Activated B cell treated with CpG ODN at 0.5 μM for 24 hours (primary cell): ENCODE measurements at regions of chr7 and their contacts with region 1.

Region 1: DNA sequence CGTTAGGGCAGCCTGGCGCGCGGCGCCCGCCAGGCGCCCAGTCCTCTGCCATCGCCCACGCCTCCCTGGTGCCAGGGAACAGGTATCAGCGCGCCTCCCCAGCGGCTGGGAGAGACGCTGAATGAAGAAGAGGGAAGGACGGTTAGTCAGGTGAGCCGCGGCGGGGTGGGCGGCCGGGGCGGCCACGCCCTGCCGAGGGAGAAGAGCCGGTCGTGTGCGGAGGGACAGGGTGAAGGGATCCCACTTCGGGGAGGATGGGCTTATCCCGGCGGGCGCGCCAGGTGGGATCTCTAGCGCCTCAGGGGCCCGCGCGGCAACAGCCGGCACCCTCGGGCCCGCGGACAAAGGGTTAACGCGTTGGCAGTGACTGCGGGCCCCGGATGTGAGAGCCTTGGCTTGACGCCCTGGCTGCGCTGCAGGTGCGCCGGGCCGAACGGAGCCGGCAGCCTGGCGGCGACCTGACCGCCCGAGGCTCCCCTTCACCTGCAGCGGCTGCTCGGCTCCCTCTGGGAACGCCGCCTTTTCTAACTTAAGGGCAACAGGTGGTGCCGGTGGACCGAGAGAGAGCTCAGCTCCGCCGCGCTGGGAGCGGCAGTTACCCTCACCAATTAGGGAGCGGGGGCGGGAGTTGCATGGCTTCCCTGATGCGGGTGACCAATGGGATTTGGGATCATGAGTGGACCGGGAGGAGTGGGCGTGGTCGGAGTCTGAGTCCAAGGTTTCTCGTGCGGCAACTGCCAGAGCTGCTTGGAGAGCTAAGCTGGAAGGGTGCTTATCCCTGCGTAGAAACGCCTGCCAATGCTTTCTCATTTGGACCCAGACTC is at the start of gene ARL4A:
- DNase-seq: peak; percentile 76
- ATAC-seq: peak; percentile 63
- H3K4me3 Mint-ChIP-seq: peak within 1 kb of the TSS; percentile 95
- H3K27ac Mint-ChIP-seq: peak within 1 kb of the TSS; percentile 96
- H3K4me1 Mint-ChIP-seq: peaks cover 47% of the 10 kb centered on the region
- H3K27me3 Mint-ChIP-seq: no peaks in the 10 kb centered on the region
- CTCF ChIP-seq: no peak
- total RNA-seq, gene ARL4A: 11.9 TPM in 2 replicates

Region 2: DNA sequence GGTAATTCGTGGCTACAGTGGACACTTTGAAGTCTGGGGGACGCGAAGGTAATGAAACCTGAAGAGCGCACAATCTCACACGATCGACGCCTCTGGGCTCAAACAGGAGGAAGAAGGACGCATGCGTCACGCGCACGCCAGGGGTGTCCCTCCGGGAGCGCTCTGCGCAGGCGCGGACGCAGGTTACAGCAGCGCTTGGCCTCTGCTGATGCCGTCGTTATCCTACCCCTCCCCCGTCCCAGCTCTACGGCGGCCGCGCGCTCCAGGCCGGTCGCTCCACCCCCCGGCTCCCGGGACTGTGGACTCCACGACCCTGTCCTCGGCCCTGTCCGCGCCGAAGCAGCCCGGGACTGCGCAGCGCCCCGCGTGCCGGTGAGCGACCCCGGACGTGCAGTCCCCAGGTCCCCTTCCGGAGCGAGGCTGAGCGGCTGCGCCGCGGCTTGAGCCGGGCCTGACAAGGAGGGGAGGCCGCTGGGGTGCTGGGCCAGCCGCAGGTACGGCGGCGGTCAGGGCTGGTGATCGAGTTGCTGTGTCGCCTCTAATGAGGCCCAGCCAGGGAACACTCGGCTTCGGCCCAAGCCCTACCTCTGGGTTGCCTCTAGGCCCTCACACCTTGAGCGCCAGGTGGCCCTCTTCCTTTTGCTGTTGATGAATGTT is 475.9 kb before region 1 on chr7 and contains the start of gene TMEM106B:
- CTCF ChIA-PET with region 1: no interaction called
- POLR2A ChIA-PET with region 1: interaction called, 4 read pairs
- intact Hi-C with region 1: loop called (anchors 1 kb)
- DNase-seq: peak; percentile 92
- ATAC-seq: peak; percentile 92
- H3K4me3 Mint-ChIP-seq: peak within 1 kb of the TSS; percentile 91
- H3K27ac Mint-ChIP-seq: peak within 1 kb of the TSS; percentile 90
- H3K4me1 Mint-ChIP-seq: peaks cover 21% of the 10 kb centered on the region
- H3K27me3 Mint-ChIP-seq: peaks cover 8% of the 10 kb centered on the region
- CTCF ChIP-seq: no peak
- total RNA-seq, gene TMEM106B: 18.1 and 22.1 TPM in 2 replicates

Region 3: DNA sequence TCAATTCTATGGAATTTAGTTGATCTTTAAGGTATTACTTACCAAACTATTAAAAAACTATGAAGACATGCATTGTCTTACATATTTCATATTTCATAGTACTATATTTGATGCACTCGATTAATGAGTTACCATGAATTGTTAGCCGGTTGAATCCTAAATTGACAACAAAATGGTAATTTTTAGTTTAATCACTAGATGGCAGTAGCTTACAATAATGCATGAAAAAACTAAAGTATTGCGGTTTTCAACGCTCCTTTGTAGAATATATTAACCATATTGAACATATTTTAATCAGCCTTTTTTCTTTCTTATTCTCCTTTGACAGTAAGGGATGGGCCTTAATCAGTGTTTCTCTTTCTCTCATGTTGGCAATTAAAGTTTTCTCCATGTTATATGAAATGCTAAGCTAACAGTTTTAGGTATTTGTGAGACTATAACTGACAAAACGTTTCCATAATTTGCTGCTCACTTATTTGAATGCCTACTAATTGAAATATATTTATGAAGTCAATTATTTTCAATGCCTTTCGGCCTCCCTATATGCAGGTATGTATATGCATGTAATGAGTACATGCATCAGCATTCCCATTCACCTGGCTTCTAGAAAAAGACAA is 48.1 kb before region 1 on chr7:
- CTCF ChIA-PET with region 1: interaction called, 9 read pairs
- POLR2A ChIA-PET with region 1: interaction called, 4 read pairs
- intact Hi-C with region 1: loop called (anchors 1 kb)
- DNase-seq: no peak
- ATAC-seq: peak; percentile 55
- H3K4me3 Mint-ChIP-seq: no peak overlapping the region
- H3K27ac Mint-ChIP-seq: no peak overlapping the region
- H3K4me1 Mint-ChIP-seq: peaks cover 27% of the 10 kb centered on the region
- H3K27me3 Mint-ChIP-seq: no peaks in the 10 kb centered on the region
- CTCF ChIP-seq: peak; percentile 77

Region 4: DNA sequence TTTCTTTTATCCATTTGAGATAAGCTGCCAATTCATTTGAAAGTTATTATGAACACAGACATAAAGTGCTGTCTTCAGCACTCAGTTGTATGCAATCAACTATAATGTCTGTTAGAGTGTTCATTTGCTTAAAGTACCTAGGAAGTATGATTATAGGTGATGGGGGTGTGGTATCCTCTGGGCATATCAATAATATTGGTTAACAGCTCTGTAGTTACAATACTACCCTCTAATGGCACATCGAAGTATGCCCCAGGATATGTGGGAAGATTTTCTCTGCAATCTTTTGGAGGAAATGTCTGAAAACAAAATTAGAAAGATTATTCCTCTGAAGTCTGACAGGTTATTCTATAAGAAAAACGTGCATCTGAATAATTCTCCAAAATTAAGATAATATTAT is 430.0 kb after region 1 on chr7:
- CTCF ChIA-PET with region 1: interaction called, 3 read pairs
- POLR2A ChIA-PET with region 1: interaction called, 3 read pairs
- intact Hi-C with region 1: loop called (anchors 2 kb)
- DNase-seq: no peak
- ATAC-seq: no peak
- H3K4me3 Mint-ChIP-seq: no peak overlapping the region
- H3K27ac Mint-ChIP-seq: no peak overlapping the region
- H3K4me1 Mint-ChIP-seq: no peaks in the 10 kb centered on the region
- H3K27me3 Mint-ChIP-seq: no peaks in the 10 kb centered on the region
- CTCF ChIP-seq: no peak

Region 5: DNA sequence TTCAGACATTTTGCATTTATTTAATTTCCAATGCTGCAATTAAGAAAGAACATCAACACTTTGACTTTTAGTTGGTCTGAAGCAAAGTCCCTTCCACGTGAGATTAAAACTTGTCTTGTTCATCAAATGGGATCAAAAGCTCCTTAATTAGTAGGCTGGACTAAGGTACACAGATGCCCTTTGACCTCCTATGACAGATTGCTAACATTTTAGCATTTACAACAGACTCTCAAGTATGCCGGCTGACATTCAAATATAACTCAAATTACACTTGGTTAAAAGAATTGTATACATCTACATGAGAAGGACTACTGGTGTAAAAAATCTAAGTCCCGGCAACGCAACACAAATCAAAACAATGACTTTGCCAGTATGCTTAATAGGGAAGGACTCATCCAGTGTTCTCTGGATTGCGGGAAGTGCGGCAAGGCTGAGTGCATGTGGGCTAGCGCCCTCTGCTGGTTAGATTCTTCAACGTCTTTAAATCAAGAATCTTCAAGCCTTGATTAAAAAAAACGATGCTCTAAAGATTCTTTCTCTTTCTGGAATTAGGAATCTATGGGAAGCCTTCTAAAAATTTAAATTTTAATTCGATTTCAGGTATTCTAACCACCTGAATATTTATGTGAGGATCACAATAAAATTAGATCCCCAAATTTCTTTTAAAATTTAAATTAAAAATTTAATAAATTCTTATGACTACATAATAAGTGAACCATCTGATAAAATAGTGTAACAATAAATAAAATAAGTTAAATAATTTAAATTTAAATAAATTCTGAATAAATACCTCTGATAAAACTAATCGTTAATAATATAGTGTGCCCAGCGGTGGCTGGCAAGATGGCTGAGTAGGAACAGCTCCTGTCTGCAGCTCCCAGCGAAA is 1770.7 kb after region 1 on chr7:
- CTCF ChIA-PET with region 1: no interaction called
- POLR2A ChIA-PET with region 1: no interaction called
- intact Hi-C with region 1: loop called (anchors 5 kb)
- DNase-seq: no peak
- ATAC-seq: no peak
- H3K4me3 Mint-ChIP-seq: no peak overlapping the region
- H3K27ac Mint-ChIP-seq: no peak overlapping the region
- H3K4me1 Mint-ChIP-seq: no peaks in the 10 kb centered on the region
- H3K27me3 Mint-ChIP-seq: no peaks in the 10 kb centered on the region
- CTCF ChIP-seq: no peak